Activated CD4-positive, alpha-beta memory T cell treated with anti-CD3 and anti-CD28 coated beads, Interleukin-2, amount 10 ng/mL, durations not matched to agents 7 days and 5 days (primary cell): ENCODE measurements at regions of chr2 and their contacts with region 1.

Region 1: GRCh38 chr2:241149925-241150659 is at the start of gene PPP1R7:
- DNase-seq: peak; percentile 97
- H3K4me3 Mint-ChIP-seq: peak within 1 kb of the TSS; percentile 92
- H3K27ac Mint-ChIP-seq: peak within 1 kb of the TSS; percentile 84
- H3K4me1 Mint-ChIP-seq: peaks cover 47% of the 10 kb centered on the region
- H3K27me3 Mint-ChIP-seq: no peaks in the 10 kb centered on the region
- total RNA-seq, gene PPP1R7: 103 to 106 TPM

Region 2: DNA sequence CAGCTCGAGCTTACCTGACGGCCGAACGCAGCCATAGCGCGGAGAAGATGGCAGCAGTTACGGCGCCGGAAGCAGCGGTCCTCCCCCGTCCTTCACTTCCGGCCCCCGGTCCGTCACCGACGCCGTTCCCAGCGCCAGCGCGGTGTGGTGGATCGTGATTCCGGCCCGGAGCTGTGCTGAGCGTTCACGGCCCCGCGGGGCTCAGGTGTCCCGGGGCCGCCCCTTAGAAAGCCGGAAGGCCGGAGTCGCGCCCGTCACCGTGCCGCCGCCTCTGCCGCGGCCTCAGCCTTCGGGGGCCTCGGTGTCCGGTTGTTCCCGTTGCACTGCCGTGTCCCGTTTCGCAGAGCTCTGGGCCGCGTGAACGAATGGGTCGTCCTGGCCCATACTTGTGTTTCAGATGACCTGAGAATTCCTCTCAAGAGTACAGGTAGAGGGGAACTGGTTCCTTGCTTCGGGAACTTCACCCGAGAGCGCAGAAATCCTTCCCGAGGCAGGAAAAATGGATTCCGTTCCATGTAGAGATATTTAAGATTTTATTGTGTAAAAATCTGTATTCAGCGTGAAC is 47.8 kb before region 1 on chr2 and contains the start of gene MTERF4:
- CTCF ChIA-PET with region 1: interaction called, 3 read pairs
- POLR2A ChIA-PET with region 1: interaction called, 41 read pairs
- DNase-seq: peak; percentile 89
- H3K4me3 Mint-ChIP-seq: peak within 1 kb of the TSS; percentile 97
- H3K27ac Mint-ChIP-seq: peak within 1 kb of the TSS; percentile 94
- H3K4me1 Mint-ChIP-seq: peaks cover 53% of the 10 kb centered on the region
- H3K27me3 Mint-ChIP-seq: no peaks in the 10 kb centered on the region
- total RNA-seq, gene MTERF4: 41.5 to 45.4 TPM

Region 3: GRCh38 chr2:241179899-241180298 is 29.8 kb after region 1 on chr2:
- CTCF ChIA-PET with region 1: no interaction called
- POLR2A ChIA-PET with region 1: no interaction called
- DNase-seq: no peak
- H3K4me3 Mint-ChIP-seq: no peak overlapping the region
- H3K27ac Mint-ChIP-seq: no peak overlapping the region
- H3K4me1 Mint-ChIP-seq: peaks cover 7% of the 10 kb centered on the region
- H3K27me3 Mint-ChIP-seq: no peaks in the 10 kb centered on the region